K562 (cell line): ENCODE measurements at regions of chr10 and their contacts with region 1.

Region 1: GRCh38 chr10:49164559-49165188 is 23.5 kb downstream of the TMEM273 start:
- DNase-seq: peak; percentile 72 to 83 (median 76)
- ATAC-seq: peak; percentile 80
- H3K4me3 ChIP-seq: no peak overlapping the region
- H3K27ac ChIP-seq: peak overlapping the region; percentile 65; the same call in 2 of the 3 replicates
- H3K4me1 ChIP-seq: peaks cover 66 to 90% of the 10 kb centered on the region in 2 experiments
- H3K27me3 ChIP-seq: no peaks in the 10 kb centered on the region
- CTCF ChIP-seq: peak; percentile 84 to 94 (median 90)
- EP300 ChIP-seq: no peak
- POLR2A ChIP-seq: no peak
- RAD21 ChIP-seq: peak; percentile 44 to 74

Region 2: DNA sequence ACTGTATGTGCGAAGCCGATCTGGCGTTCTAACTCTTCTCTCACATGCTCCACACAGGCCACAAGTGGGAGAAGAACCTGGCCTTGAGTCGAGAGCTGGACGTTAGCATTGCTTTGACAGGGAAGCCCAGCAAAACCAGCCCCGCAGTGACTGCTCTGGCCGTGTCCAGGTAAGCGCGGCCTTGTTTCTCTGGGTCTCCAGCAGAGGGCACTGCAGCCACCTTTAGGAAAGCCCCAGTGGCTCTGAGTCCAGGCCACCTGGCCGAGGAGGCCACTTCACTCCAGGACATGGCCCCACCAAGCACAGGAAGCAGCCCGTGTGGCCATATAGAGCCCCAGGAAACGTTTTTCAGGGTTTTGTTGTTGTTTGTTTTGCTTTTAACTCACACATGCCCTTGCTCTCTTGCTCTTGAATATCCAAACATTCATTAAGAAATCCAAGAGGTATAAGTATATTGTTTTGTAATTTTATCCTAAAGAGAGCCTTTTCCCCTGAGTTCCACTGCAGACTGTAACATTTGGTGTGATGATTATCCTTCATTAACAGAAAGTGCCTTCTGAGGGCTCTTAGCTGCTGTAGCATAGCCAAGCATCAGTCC is 183.3 kb before region 1 on chr10:
- CTCF ChIA-PET with region 1: interaction called, 11 read pairs
- POLR2A ChIA-PET with region 1: no interaction called
- in situ Hi-C with region 1: loop called (anchors 5 kb)
- intact Hi-C with region 1: loop called (anchors 1 kb)
- DNase-seq: peak; percentile 84 to 93 (median 88)
- ATAC-seq: peak; percentile 98
- H3K4me3 ChIP-seq: no peak overlapping the region
- H3K27ac ChIP-seq: no peak overlapping the region
- H3K4me1 ChIP-seq: peaks cover 4 to 9% of the 10 kb centered on the region in 2 experiments; a peak in 2 of 5 replicates
- H3K27me3 ChIP-seq: peaks cover 0 to 13% of the 10 kb centered on the region in 2 experiments; a peak in 2 of 5 replicates
- CTCF ChIP-seq: peak; percentile 93 to 97 (median 94)
- EP300 ChIP-seq: no peak
- POLR2A ChIP-seq: no peak
- RAD21 ChIP-seq: peak; percentile 90 to 93

Region 3: GRCh38 chr10:49115015-49115795 is 49.5 kb before region 1 on chr10 and contains the start of gene VSTM4:
- CTCF ChIA-PET with region 1: no interaction called
- POLR2A ChIA-PET with region 1: interaction called, 3 read pairs
- in situ Hi-C with region 1: no loop called
- intact Hi-C with region 1: loop called (anchors 2 kb)
- DNase-seq: peak; percentile 54 to 95 (median 91)
- ATAC-seq: peak; percentile 75
- H3K4me3 ChIP-seq: peak within 1 kb of the TSS; percentile 58
- H3K27ac ChIP-seq: peak within 1 kb of the TSS; percentile 44; the same call in 2 of the 3 replicates
- H3K4me1 ChIP-seq: peaks cover 10 to 12% of the 10 kb centered on the region in 2 experiments; a peak in 4 of 5 replicates
- H3K27me3 ChIP-seq: no peaks in the 10 kb centered on the region
- CTCF ChIP-seq: peak in 1 of 3 experiments; percentile 22; a peak in 1 of 6 replicates
- EP300 ChIP-seq: no peak
- POLR2A ChIP-seq: no peak
- RAD21 ChIP-seq: no peak
- polyA plus RNA-seq, gene VSTM4: 1.0 to 1.1 TPM

Region 4: GRCh38 chr10:49187950-49188761 is 23.5 kb after region 1 on chr10 and contains the start of gene TMEM273:
- CTCF ChIA-PET with region 1: no interaction called
- POLR2A ChIA-PET with region 1: no interaction called
- in situ Hi-C with region 1: no loop called
- intact Hi-C with region 1: loop called (anchors 2 kb)
- DNase-seq: peak; percentile 53 to 86 (median 63)
- ATAC-seq: peak; percentile 50
- H3K4me3 ChIP-seq: peak within 1 kb of the TSS; percentile 32
- H3K27ac ChIP-seq: peak within 1 kb of the TSS; percentile 57
- H3K4me1 ChIP-seq: peaks cover 42 to 45% of the 10 kb centered on the region in 2 experiments
- H3K27me3 ChIP-seq: no peaks in the 10 kb centered on the region
- CTCF ChIP-seq: no peak
- EP300 ChIP-seq: no peak
- POLR2A ChIP-seq: peak; percentile 71
- RAD21 ChIP-seq: no peak
- polyA plus RNA-seq, gene TMEM273: 97.3 to 102 TPM

Region 5: DNA sequence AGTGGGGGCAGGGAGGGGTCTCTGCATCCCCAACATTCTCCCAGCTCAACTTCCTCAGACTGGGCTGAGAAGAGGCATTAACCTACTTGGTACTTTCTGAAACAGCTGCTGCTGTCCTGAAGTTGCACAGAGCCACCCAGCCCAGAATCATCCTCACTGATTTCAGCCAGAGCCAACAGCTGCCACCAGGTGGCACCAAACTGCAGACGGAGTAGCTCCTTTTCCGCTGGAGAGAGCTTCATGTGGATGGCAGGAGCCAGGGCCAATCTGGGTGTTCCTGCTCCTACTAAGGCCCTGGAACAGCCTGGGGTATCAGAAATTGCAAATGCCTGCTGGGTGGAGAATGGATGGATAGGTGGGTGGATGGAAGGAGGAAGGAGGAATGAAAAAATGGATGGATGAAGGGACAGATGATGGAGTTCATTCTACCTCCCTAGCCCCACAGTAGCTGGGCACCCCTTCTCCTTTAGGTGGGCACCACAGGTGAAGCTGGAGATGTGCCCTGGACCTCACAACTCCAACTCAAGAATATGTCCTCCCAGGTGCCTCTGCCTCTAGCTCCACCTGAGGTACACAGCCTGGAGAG is 243.0 kb after region 1 on chr10:
- CTCF ChIA-PET with region 1: no interaction called
- POLR2A ChIA-PET with region 1: no interaction called
- in situ Hi-C with region 1: no loop called
- intact Hi-C with region 1: loop called (anchors 5 kb)
- DNase-seq: peak; percentile 81 to 85 (median 82)
- ATAC-seq: peak; percentile 94
- H3K4me3 ChIP-seq: no peak overlapping the region
- H3K27ac ChIP-seq: no peak overlapping the region
- H3K4me1 ChIP-seq: no peaks in the 10 kb centered on the region
- H3K27me3 ChIP-seq: peaks cover 4 to 46% of the 10 kb centered on the region in 2 experiments
- CTCF ChIP-seq: peak; percentile 93 to 95 (median 94)
- EP300 ChIP-seq: no peak
- POLR2A ChIP-seq: no peak
- RAD21 ChIP-seq: peak; percentile 84 to 94